CD8-positive, alpha-beta T cell (primary cell): ENCODE measurements at regions of chr2 and their contacts with region 1.

Region 1: GRCh38 chr2:20254731-20255130 is 29.8 kb upstream of the SDC1 start:
- DNase-seq: no peak
- ATAC-seq: no peak
- H3K4me3 ChIP-seq: no peak overlapping the region
- H3K4me3 Mint-ChIP-seq: no peak overlapping the region
- H3K27ac ChIP-seq: no peak overlapping the region
- H3K27ac Mint-ChIP-seq: no peak overlapping the region
- H3K4me1 ChIP-seq: no peaks in the 10 kb centered on the region
- H3K4me1 Mint-ChIP-seq: no peaks in the 10 kb centered on the region
- H3K27me3 ChIP-seq: no peaks in the 10 kb centered on the region
- H3K27me3 Mint-ChIP-seq: no peaks in the 10 kb centered on the region
- CTCF ChIP-seq: no peak

Region 2: DNA sequence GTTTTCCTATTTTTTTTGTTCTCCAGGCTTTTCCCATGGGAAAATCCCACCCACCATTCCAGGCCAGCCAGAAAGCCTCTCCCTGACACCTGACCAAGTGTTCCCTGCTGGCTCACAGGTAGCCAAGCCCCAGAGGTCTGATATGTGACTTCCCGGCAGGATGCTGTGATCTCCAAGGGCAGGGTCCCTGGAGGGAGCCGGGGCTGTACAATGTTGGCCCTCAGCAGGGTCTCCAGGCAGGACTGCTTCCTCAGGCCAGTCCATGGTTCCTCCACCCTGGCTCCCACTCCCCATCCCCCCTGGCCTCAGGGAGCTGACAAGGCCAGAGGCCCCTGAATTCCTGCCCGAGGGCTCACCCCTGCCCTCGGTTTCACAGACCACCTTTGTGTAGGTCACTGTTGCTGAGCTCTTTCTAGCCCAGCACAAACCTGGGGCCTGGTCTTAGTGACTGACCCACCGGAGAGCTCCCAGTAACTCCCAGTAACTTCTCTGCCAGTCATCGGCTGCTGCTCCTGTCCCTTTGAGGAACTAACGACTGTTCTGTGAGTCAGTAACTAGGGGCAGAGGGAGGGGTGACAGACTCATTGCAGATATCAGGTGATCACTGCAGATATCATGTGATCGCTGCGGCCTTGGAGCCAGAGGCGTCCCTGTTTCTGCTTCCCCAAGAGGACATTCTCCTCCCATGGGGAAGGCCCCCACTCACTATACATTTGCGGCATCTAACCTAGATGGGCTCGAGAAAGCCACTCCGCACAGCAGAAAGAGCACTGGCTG is 68.5 kb before region 1 on chr2:
- CTCF ChIA-PET with region 1: no interaction called
- POLR2A ChIA-PET with region 1: no interaction called
- intact Hi-C with region 1: no loop called
- DNase-seq: peak in 1 of 9 experiments; percentile 20
- ATAC-seq: no peak
- H3K4me3 ChIP-seq: no peak overlapping the region
- H3K4me3 Mint-ChIP-seq: no peak overlapping the region
- H3K27ac ChIP-seq: no peak overlapping the region
- H3K27ac Mint-ChIP-seq: no peak overlapping the region
- H3K4me1 ChIP-seq: no peaks in the 10 kb centered on the region
- H3K4me1 Mint-ChIP-seq: no peaks in the 10 kb centered on the region
- H3K27me3 ChIP-seq: no peaks in the 10 kb centered on the region
- H3K27me3 Mint-ChIP-seq: no peaks in the 10 kb centered on the region
- CTCF ChIP-seq: no peak

Region 3: GRCh38 chr2:20273045-20273444 is 18.3 kb after region 1 on chr2:
- CTCF ChIA-PET with region 1: no interaction called
- POLR2A ChIA-PET with region 1: no interaction called
- intact Hi-C with region 1: loop called in 1 of 2 experiments (anchors 2 kb)
- DNase-seq: no peak
- ATAC-seq: no peak
- H3K4me3 ChIP-seq: no peak overlapping the region
- H3K4me3 Mint-ChIP-seq: no peak overlapping the region
- H3K27ac ChIP-seq: no peak overlapping the region
- H3K27ac Mint-ChIP-seq: no peak overlapping the region
- H3K4me1 ChIP-seq: no peaks in the 10 kb centered on the region
- H3K4me1 Mint-ChIP-seq: peaks cover 24% of the 10 kb centered on the region
- H3K27me3 ChIP-seq: no peaks in the 10 kb centered on the region
- H3K27me3 Mint-ChIP-seq: no peaks in the 10 kb centered on the region
- CTCF ChIP-seq: no peak

Region 4: DNA sequence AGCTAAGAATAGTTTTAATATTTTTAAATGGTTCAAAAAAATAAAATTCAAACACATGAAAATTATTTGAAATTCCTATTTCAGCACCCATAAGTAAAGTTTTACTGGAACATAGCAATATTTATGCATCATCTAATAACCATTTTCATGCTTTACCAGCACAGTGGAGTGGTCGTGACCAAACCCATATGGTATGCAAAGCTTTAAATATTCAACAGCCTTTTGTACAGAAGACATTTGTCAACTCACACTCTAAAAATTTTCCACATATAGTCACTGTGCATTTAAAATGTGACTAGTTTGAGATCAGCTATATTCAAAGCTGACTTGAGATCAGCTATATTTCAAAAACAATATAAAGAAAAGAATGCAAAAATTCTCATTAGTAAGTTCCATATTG is 49.7 kb after region 1 on chr2:
- CTCF ChIA-PET with region 1: no interaction called
- POLR2A ChIA-PET with region 1: interaction called, 3 read pairs
- intact Hi-C with region 1: loop called in 1 of 2 experiments (anchors 10 kb)
- DNase-seq: no peak
- ATAC-seq: no peak
- H3K4me3 ChIP-seq: no peak overlapping the region
- H3K4me3 Mint-ChIP-seq: no peak overlapping the region
- H3K27ac ChIP-seq: no peak overlapping the region
- H3K27ac Mint-ChIP-seq: no peak overlapping the region
- H3K4me1 ChIP-seq: no peaks in the 10 kb centered on the region
- H3K4me1 Mint-ChIP-seq: peaks cover 22% of the 10 kb centered on the region
- H3K27me3 ChIP-seq: no peaks in the 10 kb centered on the region
- H3K27me3 Mint-ChIP-seq: no peaks in the 10 kb centered on the region
- CTCF ChIP-seq: no peak